Left cardiac atrium (tissue), 4 donors: ENCODE measurements at regions of chr10 and their contacts with region 1.

Region 1: DNA sequence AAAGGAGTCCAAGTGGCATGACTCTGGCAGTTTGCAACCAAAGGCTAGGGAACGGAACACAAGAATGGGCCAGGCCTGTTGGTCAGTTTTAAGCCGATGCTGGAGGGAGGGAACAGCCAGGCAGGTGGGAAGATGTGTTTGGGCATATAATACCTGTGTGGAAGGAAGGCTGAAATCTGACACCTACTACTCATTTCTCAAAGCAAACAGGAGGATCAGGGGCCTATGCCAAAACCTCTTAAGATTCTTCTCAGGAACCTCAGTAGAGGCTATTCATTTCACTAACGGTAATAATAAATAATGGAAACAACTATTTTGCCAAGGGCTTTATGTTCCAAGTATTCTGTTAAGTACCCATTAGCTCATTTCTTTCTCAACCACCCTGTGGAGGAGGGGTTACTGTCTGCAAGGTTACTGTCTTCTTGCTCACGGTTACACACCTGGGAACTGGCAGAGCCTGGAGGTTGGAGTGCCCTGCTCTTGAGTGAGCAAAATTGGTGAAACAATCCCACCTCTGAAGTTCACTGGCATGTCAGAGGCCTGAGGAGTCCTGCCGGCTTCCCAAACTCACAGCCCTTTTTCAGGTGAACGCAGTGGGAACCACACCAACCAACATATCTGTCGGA is 35.5 kb downstream of the GOT1 start:
- DNase-seq: no peak
- ATAC-seq: no peak

Region 2: GRCh38 chr10:99276848-99277486 is 117.9 kb before region 1 on chr10:
- intact Hi-C with region 1: no loop called
- DNase-seq: no peak
- ATAC-seq: no peak

Region 3: DNA sequence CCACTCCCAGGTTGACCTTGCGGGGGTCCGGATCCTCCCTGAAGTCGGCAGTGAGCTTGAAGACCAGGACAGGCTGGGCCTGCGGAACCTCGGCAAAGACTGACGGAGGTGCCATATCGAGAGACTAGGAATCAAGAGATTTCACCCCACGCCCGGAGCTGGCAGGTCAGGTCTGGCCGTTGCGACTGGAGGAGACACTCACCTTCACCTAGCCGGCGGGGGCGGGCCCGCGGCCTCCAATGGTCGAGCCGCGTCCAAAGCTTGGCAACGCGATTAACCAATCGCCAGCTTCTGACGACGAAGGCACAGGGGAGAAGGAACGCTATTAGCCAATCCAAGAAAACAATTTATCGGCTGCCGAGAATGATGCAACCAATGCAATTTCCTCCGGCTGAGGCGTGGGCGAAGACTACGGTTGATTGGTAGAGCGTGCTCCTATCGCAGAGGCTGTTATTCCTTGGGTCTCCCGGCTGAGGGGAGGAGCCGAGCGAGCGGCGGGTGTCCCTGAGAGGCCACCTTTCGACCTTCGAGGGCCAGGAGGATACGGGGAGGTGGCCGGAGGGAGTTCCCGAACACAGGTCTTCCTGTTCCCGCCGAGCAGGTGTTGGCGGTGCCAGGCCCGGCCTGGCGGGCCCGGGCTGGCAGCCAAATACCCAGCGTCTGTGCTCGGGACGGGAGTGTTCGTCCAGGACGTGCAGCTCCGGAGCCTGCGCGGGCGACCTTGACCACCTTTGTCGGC is 35.7 kb after region 1 on chr10 and contains the start of gene GOT1:
- intact Hi-C with region 1: loop called in 1 of 2 experiments (anchors 5 kb)
- DNase-seq: peak; percentile 96
- ATAC-seq: peak; percentile 97 to 99
- total RNA-seq, gene GOT1: 404 to 437 TPM

Region 4: DNA sequence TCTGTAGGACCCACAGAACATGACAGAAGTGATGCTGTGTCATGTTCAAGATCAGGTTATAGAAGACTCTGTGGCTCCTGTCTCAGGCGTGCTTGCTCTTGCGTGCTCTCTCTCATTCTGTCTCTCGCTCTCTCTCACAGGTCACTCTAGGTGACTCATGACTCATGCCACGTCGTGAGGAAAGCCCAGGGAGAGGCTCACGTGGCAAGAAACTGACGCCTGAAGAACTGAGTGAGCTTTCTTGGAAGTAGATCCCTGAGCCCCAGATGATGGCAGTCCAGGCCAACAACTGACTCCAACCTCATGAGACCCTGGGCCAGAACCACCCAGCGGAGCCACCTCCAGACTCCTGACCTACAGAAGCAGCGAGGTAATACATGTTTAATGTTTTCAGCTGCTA is 511.6 kb after region 1 on chr10:
- intact Hi-C with region 1: no loop called
- DNase-seq: peak; percentile 26
- ATAC-seq: peak; percentile 71 to 81